Adrenal gland (tissue), 19 donors: ENCODE measurements at regions of chr2 and their contacts with region 1.

Region 1: GRCh38 chr2:207625018-207625907 is at the start of gene METTL21A:
- DNase-seq: peak; percentile 85 to 92 (median 89)
- H3K4me3 ChIP-seq: peak within 1 kb of the TSS; percentile 56 to 95 (median 72)
- H3K27ac ChIP-seq: peak within 1 kb of the TSS; percentile 80 to 97 (median 93)
- H3K4me1 ChIP-seq: peaks cover 0 to 14% of the 10 kb centered on the region in 2 donors
- H3K27me3 ChIP-seq: no peaks in the 10 kb centered on the region
- CTCF ChIP-seq: peak in 5 of 6 experiments; percentile 28 to 53 (median 39)
- POLR2A ChIP-seq: peak; percentile 62 to 76
- total RNA-seq, gene METTL21A: 6.9 to 49.7 (median 14.3) TPM

Region 2: GRCh38 chr2:207055257-207055656 is 570.0 kb before region 1 on chr2:
- intact Hi-C with region 1: no loop called
- DNase-seq: no peak
- H3K4me3 ChIP-seq: no peak overlapping the region
- H3K27ac ChIP-seq: no peak overlapping the region
- H3K4me1 ChIP-seq: no peaks in the 10 kb centered on the region
- H3K27me3 ChIP-seq: no peaks in the 10 kb centered on the region
- CTCF ChIP-seq: no peak
- POLR2A ChIP-seq: no peak

Region 3: GRCh38 chr2:207529330-207530159 is 95.7 kb before region 1 on chr2 and contains the start of gene CREB1:
- intact Hi-C with region 1: loop called (anchors 10 kb)
- DNase-seq: peak; percentile 98 to 100 (median 98)
- H3K4me3 ChIP-seq: peak within 1 kb of the TSS; percentile 35 to 91 (median 72)
- H3K27ac ChIP-seq: peak within 1 kb of the TSS; percentile 75 to 98 (median 97)
- H3K4me1 ChIP-seq: peaks cover 7 to 31% of the 10 kb centered on the region in 2 donors
- H3K27me3 ChIP-seq: no peaks in the 10 kb centered on the region
- CTCF ChIP-seq: peak in 1 of 6 experiments; percentile 2
- POLR2A ChIP-seq: peak; percentile 95 to 98
- total RNA-seq, gene CREB1: 24.8 to 77.8 (median 42.3) TPM

Region 4: DNA sequence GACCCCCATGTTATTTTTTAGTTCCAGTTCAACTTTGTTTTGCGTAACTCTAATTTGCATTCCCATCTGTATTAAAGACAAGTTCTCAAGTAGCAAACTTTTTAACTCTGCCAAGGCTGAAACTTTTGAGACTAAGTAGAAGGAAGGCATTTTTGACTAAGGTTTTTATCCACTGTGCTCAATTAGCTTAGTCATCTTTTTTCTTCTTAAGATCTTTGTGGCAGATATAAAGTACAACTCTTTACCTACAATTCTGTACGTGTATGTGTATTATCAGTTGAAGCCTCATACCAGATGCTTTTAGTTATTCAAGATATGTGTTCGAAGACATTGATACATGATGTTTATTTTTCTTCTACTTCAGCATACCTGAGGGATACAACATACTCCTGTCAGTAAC is 53.9 kb before region 1 on chr2:
- intact Hi-C with region 1: no loop called
- DNase-seq: no peak
- H3K4me3 ChIP-seq: no peak overlapping the region
- H3K27ac ChIP-seq: no peak overlapping the region
- H3K4me1 ChIP-seq: no peaks in the 10 kb centered on the region
- H3K27me3 ChIP-seq: no peaks in the 10 kb centered on the region
- CTCF ChIP-seq: no peak
- POLR2A ChIP-seq: no peak

Region 5: GRCh38 chr2:207710814-207711740 is 85.8 kb after region 1 on chr2 and contains the start of gene CCNYL1:
- intact Hi-C with region 1: loop called in 1 of 2 experiments (anchors 5 kb)
- DNase-seq: peak; percentile 99 to 100 (median 99)
- H3K4me3 ChIP-seq: peak within 1 kb of the TSS; percentile 58 to 96 (median 88)
- H3K27ac ChIP-seq: peak within 1 kb of the TSS in 4 of 5 donors; percentile 68 to 95 (median 82)
- H3K4me1 ChIP-seq: peaks cover 5 to 17% of the 10 kb centered on the region in 2 donors
- H3K27me3 ChIP-seq: no peaks in the 10 kb centered on the region
- CTCF ChIP-seq: peak in 4 of 6 experiments; percentile 38 to 56 (median 46)
- POLR2A ChIP-seq: peak; percentile 72 to 98
- total RNA-seq, gene CCNYL1: 2.0 to 11.6 (median 7.3) TPM

Region 6: DNA sequence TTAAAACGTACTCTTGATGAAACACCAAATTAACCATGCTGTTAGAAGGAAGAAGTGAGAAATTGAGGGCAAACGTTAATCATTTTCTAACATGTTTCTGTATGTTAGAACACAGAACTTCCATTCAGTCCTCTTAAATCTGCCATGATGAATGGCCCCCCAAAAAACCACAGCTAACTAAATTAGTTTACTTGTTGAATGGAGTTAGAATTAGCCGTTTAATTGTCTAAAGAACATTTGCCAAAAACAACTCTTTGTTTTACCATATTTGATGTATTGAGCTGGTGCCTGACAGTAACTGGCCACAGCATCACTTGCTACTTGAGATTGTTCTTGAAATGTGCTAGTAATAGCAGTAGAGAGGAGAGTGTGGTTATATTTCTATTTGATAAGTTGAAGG is 98.8 kb after region 1 on chr2:
- intact Hi-C with region 1: no loop called
- DNase-seq: no peak
- H3K4me3 ChIP-seq: no peak overlapping the region
- H3K27ac ChIP-seq: no peak overlapping the region
- H3K4me1 ChIP-seq: no peaks in the 10 kb centered on the region
- H3K27me3 ChIP-seq: no peaks in the 10 kb centered on the region
- CTCF ChIP-seq: no peak
- POLR2A ChIP-seq: no peak

Region 7: GRCh38 chr2:207734264-207734635 is 109.0 kb after region 1 on chr2:
- intact Hi-C with region 1: loop called in 1 of 2 experiments (anchors 10 kb)
- DNase-seq: no peak
- H3K4me3 ChIP-seq: no peak overlapping the region
- H3K27ac ChIP-seq: no peak overlapping the region
- H3K4me1 ChIP-seq: no peaks in the 10 kb centered on the region
- H3K27me3 ChIP-seq: no peaks in the 10 kb centered on the region
- CTCF ChIP-seq: peak; percentile 9 to 56 (median 48)
- POLR2A ChIP-seq: no peak